Common myeloid progenitor, CD34-positive (primary cell): ENCODE measurements at regions of chr14 and their contacts with region 1.

Region 1: GRCh38 chr14:77151918-77152588 is 10.5 kb upstream of the ZDHHC22 start:
- DNase-seq: peak; percentile 34 to 67 (median 58)
- H3K4me3 ChIP-seq: no peak overlapping the region
- H3K27ac ChIP-seq: no peak overlapping the region
- H3K4me1 ChIP-seq: no peaks in the 10 kb centered on the region
- H3K27me3 ChIP-seq: peaks cover 2 to 18% (median 7%) of the 10 kb centered on the region in 5 experiments

Region 2: GRCh38 chr14:77053046-77053841 is 98.8 kb before region 1 on chr14:
- CTCF ChIA-PET with region 1: no interaction called
- POLR2A ChIA-PET with region 1: no interaction called
- DNase-seq: peak; percentile 87 to 89 (median 89)
- H3K4me3 ChIP-seq: no peak overlapping the region
- H3K27ac ChIP-seq: no peak overlapping the region
- H3K4me1 ChIP-seq: peaks cover 0 to 22% (median 11%) of the 10 kb centered on the region in 4 experiments
- H3K27me3 ChIP-seq: no peaks in the 10 kb centered on the region

Region 3: GRCh38 chr14:77133720-77134338 is 18.2 kb before region 1 on chr14:
- CTCF ChIA-PET with region 1: interaction called, 36 read pairs
- POLR2A ChIA-PET with region 1: no interaction called
- DNase-seq: peak; percentile 83 to 93 (median 91)
- H3K4me3 ChIP-seq: no peak overlapping the region
- H3K27ac ChIP-seq: no peak overlapping the region
- H3K4me1 ChIP-seq: no peaks in the 10 kb centered on the region
- H3K27me3 ChIP-seq: peaks cover 0 to 86% (median 40%) of the 10 kb centered on the region in 5 experiments

Region 4: DNA sequence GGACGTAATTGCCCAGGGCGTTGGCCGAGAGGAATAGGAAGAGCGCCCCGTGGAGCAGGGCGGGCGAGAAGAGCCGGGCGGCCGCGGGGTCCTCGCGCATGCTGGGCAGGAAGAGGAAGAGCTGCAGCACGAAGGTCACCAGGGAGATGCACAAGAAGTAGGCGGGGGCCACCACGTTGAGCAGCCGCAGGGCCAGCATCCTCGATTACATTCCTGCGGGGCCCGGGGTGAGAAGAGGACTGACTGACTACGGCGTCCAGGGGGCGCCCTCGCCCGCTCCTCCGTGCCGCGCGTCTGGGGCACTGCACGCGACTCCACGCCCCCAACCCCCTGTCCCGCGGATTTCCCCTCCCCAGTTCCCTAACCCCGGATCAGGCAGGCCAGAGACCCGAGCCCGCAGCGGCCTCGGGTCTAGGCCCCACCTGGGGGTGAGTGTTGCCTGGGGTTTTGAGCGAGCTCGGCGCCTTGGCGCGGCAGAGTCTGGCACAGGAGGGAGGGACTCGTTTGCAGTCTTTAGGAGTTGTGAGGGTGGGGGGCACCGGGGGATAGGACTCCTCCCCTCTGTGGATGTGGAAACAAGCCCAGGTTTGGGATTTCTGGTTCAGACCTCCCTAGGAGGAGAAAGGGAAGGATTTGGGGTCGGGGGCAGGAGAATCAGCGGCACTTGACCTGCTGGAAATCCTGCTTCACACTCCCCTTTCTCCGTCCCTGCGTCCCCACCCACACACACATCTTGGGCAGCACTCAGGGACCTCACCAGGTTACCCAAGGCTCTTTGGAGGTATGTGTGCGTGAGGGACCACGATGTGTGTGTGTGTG is 12.3 kb before region 1 on chr14:
- CTCF ChIA-PET with region 1: interaction called, 58 read pairs
- POLR2A ChIA-PET with region 1: no interaction called
- DNase-seq: peak; percentile 59 to 76 (median 71)
- H3K4me3 ChIP-seq: peak overlapping the region in 3 of 7 experiments; percentile 4 to 71 (median 55)
- H3K27ac ChIP-seq: no peak overlapping the region
- H3K4me1 ChIP-seq: peaks cover 0 to 34% (median 30%) of the 10 kb centered on the region in 4 experiments
- H3K27me3 ChIP-seq: peaks cover 0 to 93% (median 60%) of the 10 kb centered on the region in 5 experiments

Region 5: DNA sequence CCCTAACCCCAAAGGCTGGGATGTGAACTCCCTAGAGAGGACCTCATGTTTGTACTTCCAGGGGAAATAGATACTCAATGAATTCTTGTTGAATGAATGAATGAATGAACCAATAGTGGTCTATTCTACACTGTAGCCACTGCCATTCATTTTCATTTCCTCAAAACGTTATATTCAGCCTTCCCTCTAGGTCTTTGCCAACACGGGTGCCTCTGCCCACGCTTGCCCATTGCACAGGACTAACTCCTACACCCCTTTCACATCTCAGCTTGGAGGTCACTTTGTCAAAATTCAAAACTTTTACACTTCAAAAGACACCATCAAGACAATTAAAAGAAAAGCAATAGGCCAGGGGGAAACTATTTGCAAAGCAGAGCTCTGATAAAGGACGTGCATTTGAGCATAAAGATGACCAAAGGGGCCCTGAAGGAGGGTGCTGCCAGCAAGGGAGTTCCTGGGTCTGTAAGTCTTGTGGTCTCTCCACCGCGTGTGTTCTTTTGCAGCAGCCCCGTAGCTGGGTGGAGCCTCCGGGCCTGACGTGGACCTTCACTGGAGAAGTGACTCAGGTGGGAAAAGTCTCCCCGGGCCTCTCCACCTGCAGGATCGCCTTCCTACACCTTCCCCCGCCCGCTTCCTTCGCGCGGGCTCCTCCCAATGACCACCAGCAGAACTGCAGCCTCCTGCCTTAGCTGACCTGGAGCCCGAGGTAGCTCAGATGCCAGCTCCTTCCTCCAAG is 61.1 kb after region 1 on chr14:
- CTCF ChIA-PET with region 1: interaction called, 23 read pairs
- POLR2A ChIA-PET with region 1: no interaction called
- DNase-seq: peak; percentile 36 to 46 (median 37)
- H3K4me3 ChIP-seq: no peak overlapping the region
- H3K27ac ChIP-seq: no peak overlapping the region
- H3K4me1 ChIP-seq: no peaks in the 10 kb centered on the region
- H3K27me3 ChIP-seq: peaks cover 0 to 25% (median 2%) of the 10 kb centered on the region in 5 experiments

Region 6: DNA sequence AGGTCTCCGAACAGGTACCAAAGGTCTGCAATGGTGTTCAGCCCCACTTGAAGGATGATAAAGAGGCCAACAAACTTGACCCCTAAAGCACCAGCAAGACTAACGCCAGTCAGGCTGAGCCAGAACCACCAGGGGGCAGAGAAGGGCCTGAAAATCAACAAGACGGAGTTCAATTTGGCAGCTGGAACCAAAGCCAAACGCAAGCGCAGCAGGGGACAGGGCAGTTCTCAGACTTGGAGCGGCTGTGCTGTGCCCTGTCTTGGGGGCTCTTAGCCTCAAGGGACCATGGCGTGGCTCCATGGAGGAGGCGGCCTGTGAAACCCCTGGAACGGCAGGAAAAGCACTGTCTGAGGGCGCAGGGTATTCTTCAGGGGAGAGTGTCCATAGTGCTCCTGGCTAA is 149.1 kb after region 1 on chr14:
- CTCF ChIA-PET with region 1: interaction called, 11 read pairs
- POLR2A ChIA-PET with region 1: no interaction called
- DNase-seq: peak; percentile 81 to 89 (median 83)
- H3K4me3 ChIP-seq: no peak overlapping the region
- H3K27ac ChIP-seq: no peak overlapping the region
- H3K4me1 ChIP-seq: peaks cover 0 to 8% (median 6%) of the 10 kb centered on the region in 4 experiments
- H3K27me3 ChIP-seq: no peaks in the 10 kb centered on the region

Region 7: GRCh38 chr14:77314043-77314442 is 162.0 kb after region 1 on chr14:
- CTCF ChIA-PET with region 1: interaction called, 59 read pairs
- POLR2A ChIA-PET with region 1: interaction called, 3 read pairs
- DNase-seq: no peak
- H3K4me3 ChIP-seq: no peak overlapping the region
- H3K27ac ChIP-seq: no peak overlapping the region
- H3K4me1 ChIP-seq: peaks cover 0 to 9% (median 4%) of the 10 kb centered on the region in 4 experiments
- H3K27me3 ChIP-seq: no peaks in the 10 kb centered on the region

Region 8: DNA sequence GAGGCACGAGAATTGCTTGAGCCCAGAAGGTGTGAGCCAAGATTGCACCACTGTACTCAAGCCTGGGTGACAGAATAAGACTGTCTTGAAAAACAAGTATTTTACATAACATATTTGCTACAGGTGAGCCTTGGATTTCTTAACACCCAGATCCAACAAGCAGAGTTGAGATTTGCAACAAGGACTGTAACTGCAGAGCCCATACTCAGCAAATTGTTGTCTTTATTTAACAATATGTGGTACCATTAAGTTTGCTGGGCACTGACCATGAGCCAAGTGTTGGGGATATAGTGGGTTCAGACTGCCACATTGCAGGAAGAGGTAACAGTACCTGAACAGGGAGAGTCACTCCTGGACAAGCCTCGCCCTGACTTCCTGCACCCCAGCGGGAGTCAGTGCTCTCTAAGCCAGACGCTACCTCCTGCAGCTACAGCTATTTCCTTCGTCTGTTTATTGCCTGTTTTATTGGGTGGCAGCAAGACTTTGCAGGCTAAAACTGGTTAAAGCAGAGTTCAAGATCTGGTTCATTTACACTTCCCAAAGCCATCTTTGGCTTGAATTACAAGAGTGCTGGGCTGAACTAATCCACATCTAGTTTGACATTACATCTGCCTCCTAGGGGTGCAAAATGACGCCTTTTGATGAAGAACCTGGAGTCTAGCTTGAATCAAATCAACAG is 318.3 kb after region 1 on chr14:
- CTCF ChIA-PET with region 1: no interaction called
- POLR2A ChIA-PET with region 1: no interaction called
- DNase-seq: no peak
- H3K4me3 ChIP-seq: no peak overlapping the region
- H3K27ac ChIP-seq: no peak overlapping the region
- H3K4me1 ChIP-seq: no peaks in the 10 kb centered on the region
- H3K27me3 ChIP-seq: no peaks in the 10 kb centered on the region